Esophagus squamous epithelium (tissue), 5 donors: ENCODE measurements at regions of chr1 and their contacts with region 1.

Region 1: GRCh38 chr1:16078925-16079656 is 5.6 kb upstream of the FAM131C start:
- DNase-seq: no peak
- H3K4me3 ChIP-seq: peak overlapping the region in 2 of 4 donors; percentile 13 to 41
- H3K27ac ChIP-seq: peak overlapping the region; percentile 4 to 80 (median 64)
- H3K4me1 ChIP-seq: peaks cover 17 to 82% (median 58%) of the 10 kb centered on the region in 3 donors
- H3K27me3 ChIP-seq: peaks cover 0 to 1% (median 0%) of the 10 kb centered on the region in 4 donors
- CTCF ChIP-seq: peak; percentile 85 to 96 (median 93)
- POLR2A ChIP-seq: no peak

Region 2: DNA sequence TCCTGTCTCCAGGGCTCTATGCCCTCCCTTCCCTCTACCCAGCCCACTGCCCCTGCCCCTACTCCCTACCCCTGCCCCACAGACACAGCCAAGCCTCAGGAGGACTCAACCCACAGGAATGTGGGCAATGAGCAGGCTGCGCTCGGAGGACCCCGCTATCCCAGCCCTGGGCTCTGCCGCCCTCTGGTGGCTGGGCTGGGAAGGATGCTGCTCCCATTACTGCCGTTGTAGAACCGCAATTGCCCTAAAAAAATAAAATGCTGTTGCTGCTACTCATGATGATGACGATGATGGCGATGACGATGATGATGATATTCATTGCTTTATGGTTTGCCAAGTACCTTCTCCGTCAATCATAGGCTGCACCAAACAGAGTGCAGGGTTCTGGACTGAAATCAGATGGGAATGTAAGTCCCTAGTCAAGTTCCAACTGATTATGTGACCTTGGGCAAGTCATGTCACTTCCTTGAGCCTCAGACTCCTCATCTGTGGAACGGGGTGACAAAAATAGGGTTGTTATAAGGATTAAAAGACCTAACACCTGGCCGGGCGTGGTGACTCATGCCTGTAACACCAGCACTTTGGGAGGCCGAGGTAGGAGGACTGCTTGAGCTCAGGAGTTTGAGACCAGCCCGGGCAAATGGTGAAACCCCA is 108.8 kb after region 1 on chr1:
- intact Hi-C with region 1: loop called (anchors 2 kb)
- DNase-seq: no peak
- H3K4me3 ChIP-seq: no peak overlapping the region
- H3K27ac ChIP-seq: peak overlapping the region; percentile 75 to 93 (median 86)
- H3K4me1 ChIP-seq: peaks cover 51 to 95% (median 62%) of the 10 kb centered on the region in 3 donors
- H3K27me3 ChIP-seq: peaks cover 0 to 6% (median 0%) of the 10 kb centered on the region in 4 donors
- CTCF ChIP-seq: peak; percentile 96 to 99 (median 98)
- POLR2A ChIP-seq: no peak

Region 3: GRCh38 chr1:16243936-16244649 is 165.0 kb after region 1 on chr1:
- intact Hi-C with region 1: loop called (anchors 10 kb)
- DNase-seq: no peak
- H3K4me3 ChIP-seq: peak overlapping the region in 1 of 4 donors; percentile 16
- H3K27ac ChIP-seq: peak overlapping the region; percentile 30 to 67 (median 38)
- H3K4me1 ChIP-seq: peaks cover 25 to 69% (median 35%) of the 10 kb centered on the region in 3 donors
- H3K27me3 ChIP-seq: no peaks in the 10 kb centered on the region
- CTCF ChIP-seq: peak; percentile 82 to 95 (median 90)
- POLR2A ChIP-seq: no peak

Region 4: GRCh38 chr1:16366722-16367257 is 287.7 kb after region 1 on chr1 and contains the start of gene SZRD1:
- intact Hi-C with region 1: loop called (anchors 10 kb)
- DNase-seq: peak; percentile 95
- H3K4me3 ChIP-seq: peak within 1 kb of the TSS; percentile 64 to 97 (median 90)
- H3K27ac ChIP-seq: peak within 1 kb of the TSS; percentile 96 to 100 (median 100)
- H3K4me1 ChIP-seq: peaks cover 15 to 75% (median 51%) of the 10 kb centered on the region in 3 donors
- H3K27me3 ChIP-seq: no peaks in the 10 kb centered on the region
- CTCF ChIP-seq: peak in 1 of 6 experiments; percentile 33
- POLR2A ChIP-seq: peak in 1 of 4 donors; percentile 72
- total RNA-seq, gene SZRD1: 51.7 to 65.0 (median 58.5) TPM